ENCODE measurements at regions of chr10 and their contacts with region 1.

Region 1: DNA sequence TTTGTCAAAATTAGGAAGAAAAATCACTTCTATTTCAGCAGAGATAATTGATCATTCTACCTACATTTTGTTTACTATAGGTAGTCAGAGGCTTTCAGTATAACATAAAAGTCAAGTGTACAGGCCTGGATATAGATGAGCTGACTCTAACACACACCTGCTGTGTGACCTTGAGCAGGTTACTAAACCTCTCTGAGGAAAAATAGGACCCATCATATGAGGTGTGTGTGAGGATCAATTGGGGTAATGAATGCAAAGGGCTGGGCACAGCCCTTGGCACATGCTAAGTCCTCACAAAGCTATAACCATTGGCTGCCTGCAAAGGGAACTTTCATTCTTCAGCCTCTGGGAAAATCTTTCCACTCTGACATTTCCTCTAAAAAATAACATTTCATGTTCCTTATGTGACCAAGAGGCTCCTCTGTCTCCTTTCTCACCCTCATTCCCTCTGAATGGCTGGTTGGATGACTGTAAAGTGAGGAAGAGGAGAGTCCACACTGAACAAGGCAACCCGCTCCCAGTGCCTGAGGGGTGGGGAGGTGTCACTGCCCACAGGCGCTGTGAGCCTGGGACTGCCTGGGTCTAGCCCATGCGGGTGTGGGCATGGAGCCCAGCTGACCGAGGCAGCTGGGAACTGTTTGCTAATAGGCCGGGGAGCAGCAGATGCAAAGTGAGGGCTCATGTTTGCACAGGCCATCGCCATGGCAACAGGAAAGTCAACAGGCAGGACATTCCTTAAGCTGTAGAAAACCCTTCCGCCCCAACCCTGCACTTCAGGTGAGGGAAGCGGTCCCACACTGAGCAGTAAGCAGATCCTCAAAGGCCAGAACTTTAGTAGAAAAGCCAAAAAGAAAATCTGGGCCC is 36.8 kb downstream of the MYOF start:
- DNase-seq: peak in 1 of 3 donors; percentile 26
- H3K4me3 ChIP-seq: no peak overlapping the region
- H3K4me3 Mint-ChIP-seq: no peak overlapping the region
- H3K27ac ChIP-seq: no peak overlapping the region
- H3K27ac Mint-ChIP-seq: peak overlapping the region in 5 of 7 donors; percentile 2 to 79 (median 50)
- H3K4me1 ChIP-seq: peaks cover 26 to 28% of the 10 kb centered on the region in 2 donors
- H3K4me1 Mint-ChIP-seq: peaks cover 42% of the 10 kb centered on the region
- H3K27me3 ChIP-seq: no peaks in the 10 kb centered on the region
- H3K27me3 Mint-ChIP-seq: no peaks in the 10 kb centered on the region
- CTCF ChIP-seq: no peak

Region 2: GRCh38 chr10:93482145-93482834 is 37.0 kb after region 1 on chr10 and contains the start of gene MYOF:
- intact Hi-C with region 1: loop called in 1 of 2 experiments (anchors 5 kb)
- DNase-seq: peak; percentile 77 to 82 (median 81)
- H3K4me3 ChIP-seq: peak within 1 kb of the TSS; percentile 58 to 98 (median 84)
- H3K4me3 Mint-ChIP-seq: peak within 1 kb of the TSS; percentile 92 to 99
- H3K27ac ChIP-seq: peak within 1 kb of the TSS; percentile 77 to 99
- H3K27ac Mint-ChIP-seq: peak within 1 kb of the TSS; percentile 92 to 99 (median 96)
- H3K4me1 ChIP-seq: peaks cover 20 to 37% of the 10 kb centered on the region in 2 donors
- H3K4me1 Mint-ChIP-seq: peaks cover 41% of the 10 kb centered on the region
- H3K27me3 ChIP-seq: no peaks in the 10 kb centered on the region
- H3K27me3 Mint-ChIP-seq: peaks cover 0 to 2% (median 2%) of the 10 kb centered on the region in 3 donors
- CTCF ChIP-seq: peak; percentile 80
- polyA plus RNA-seq, gene MYOF: 9.7 to 29.1 (median 14.5) TPM